Caco-2 (cell line): ENCODE measurements at regions of chr7 and their contacts with region 1.

Region 1: DNA sequence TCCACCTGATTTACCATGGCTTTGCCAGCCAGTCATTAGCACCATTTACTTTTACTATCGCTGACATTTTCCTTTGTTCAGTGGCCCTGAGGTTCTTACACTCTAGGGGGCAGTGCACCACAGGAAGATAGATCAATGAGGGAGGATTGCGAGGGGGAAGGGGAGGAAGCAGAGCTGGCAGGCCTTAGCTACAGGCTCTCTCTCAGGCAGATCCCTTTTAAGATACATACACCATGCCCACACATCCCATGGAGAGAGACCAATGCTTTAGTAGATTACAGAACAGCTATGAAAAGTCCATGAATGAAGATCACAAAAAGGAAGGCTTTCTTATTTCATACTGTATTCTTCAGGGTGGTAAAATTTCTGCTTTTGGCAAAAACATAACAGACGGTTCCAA is 47.4 kb downstream of the DENND11 start:
- DNase-seq: peak; percentile 76 to 77
- H3K4me3 ChIP-seq: no peak overlapping the region
- H3K4me3 Mint-ChIP-seq: no peak overlapping the region
- H3K27ac Mint-ChIP-seq: no peak overlapping the region
- H3K4me1 ChIP-seq: peaks cover 5% of the 10 kb centered on the region; the same call in 1 of the 2 replicates
- H3K4me1 Mint-ChIP-seq: peaks cover 6% of the 10 kb centered on the region
- H3K27me3 ChIP-seq: no peaks in the 10 kb centered on the region
- H3K27me3 Mint-ChIP-seq: no peaks in the 10 kb centered on the region
- CTCF ChIP-seq: peak; percentile 64 to 89

Region 2: DNA sequence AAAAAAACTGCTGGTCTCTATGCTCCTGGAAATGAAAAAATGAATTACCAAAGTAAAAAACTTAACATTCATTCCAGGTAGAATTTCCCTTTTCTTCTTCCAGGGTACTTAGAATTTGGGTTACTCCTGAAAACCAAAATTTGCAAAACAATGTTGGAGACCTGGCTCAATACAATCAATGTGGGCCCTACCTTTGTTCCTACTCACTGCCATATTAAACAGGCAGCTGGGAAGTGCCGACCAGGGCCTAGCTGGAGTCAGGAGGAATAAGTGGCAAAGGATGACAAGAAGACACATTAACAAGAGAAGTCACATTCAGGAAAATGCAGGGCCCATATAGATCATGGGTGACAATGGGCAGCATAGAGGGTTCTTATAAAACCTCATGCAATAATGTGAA is 109.7 kb before region 1 on chr7:
- CTCF ChIA-PET with region 1: no interaction called
- POLR2A ChIA-PET with region 1: no interaction called
- intact Hi-C with region 1: loop called (anchors 5 kb)
- DNase-seq: no peak
- H3K4me3 ChIP-seq: no peak overlapping the region
- H3K4me3 Mint-ChIP-seq: no peak overlapping the region
- H3K27ac Mint-ChIP-seq: no peak overlapping the region
- H3K4me1 ChIP-seq: no peaks in the 10 kb centered on the region
- H3K4me1 Mint-ChIP-seq: no peaks in the 10 kb centered on the region
- H3K27me3 ChIP-seq: no peaks in the 10 kb centered on the region
- H3K27me3 Mint-ChIP-seq: peaks cover 15% of the 10 kb centered on the region
- CTCF ChIP-seq: no peak

Region 3: GRCh38 chr7:141701489-141702046 is 47.0 kb after region 1 on chr7:
- CTCF ChIA-PET with region 1: interaction called, 7 read pairs
- POLR2A ChIA-PET with region 1: no interaction called
- intact Hi-C with region 1: loop called (anchors 10 kb)
- DNase-seq: peak; percentile 59 to 60
- H3K4me3 ChIP-seq: peak overlapping the region; percentile 84
- H3K4me3 Mint-ChIP-seq: peak overlapping the region; percentile 60
- H3K27ac Mint-ChIP-seq: no peak overlapping the region
- H3K4me1 ChIP-seq: peaks cover 46% of the 10 kb centered on the region
- H3K4me1 Mint-ChIP-seq: peaks cover 28% of the 10 kb centered on the region
- H3K27me3 ChIP-seq: no peaks in the 10 kb centered on the region
- H3K27me3 Mint-ChIP-seq: no peaks in the 10 kb centered on the region
- CTCF ChIP-seq: no peak

Region 4: DNA sequence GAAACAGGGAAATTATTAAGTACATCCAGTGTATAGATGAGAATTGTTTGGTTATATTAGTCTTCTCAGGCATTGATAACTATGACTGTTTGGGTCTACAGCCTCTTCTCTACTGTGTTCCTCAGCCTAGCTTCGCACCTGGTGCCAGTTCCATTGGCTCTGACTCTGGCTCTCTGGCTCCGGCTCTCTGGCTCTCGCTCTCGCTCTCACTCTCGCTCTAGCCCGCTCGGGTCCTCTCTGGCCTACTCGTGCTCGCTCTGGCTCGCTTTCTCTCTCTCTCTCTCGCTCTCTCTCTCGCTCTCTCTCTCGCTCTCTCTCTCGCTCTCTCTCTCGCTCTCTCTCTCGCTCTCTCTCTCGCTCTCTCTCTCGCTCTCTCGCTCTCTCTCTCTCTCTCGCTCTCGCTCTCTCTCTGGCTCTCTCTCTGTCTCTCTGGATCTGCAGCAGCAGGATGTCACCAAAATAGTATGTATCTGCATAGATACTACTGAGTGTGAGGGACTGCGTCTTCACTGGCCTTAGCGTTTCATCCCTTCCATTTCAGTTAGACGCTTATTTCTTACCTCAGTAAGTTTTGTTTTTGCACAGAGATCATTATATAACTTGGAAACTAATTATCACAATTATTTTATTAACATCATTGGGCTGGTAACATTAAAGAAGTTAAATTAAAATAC is 77.1 kb after region 1 on chr7:
- CTCF ChIA-PET with region 1: interaction called, 65 read pairs
- POLR2A ChIA-PET with region 1: no interaction called
- intact Hi-C with region 1: no loop called
- DNase-seq: no peak
- H3K4me3 ChIP-seq: no peak overlapping the region
- H3K4me3 Mint-ChIP-seq: no peak overlapping the region
- H3K27ac Mint-ChIP-seq: no peak overlapping the region
- H3K4me1 ChIP-seq: no peaks in the 10 kb centered on the region
- H3K4me1 Mint-ChIP-seq: no peaks in the 10 kb centered on the region
- H3K27me3 ChIP-seq: no peaks in the 10 kb centered on the region
- H3K27me3 Mint-ChIP-seq: no peaks in the 10 kb centered on the region
- CTCF ChIP-seq: no peak

Region 5: DNA sequence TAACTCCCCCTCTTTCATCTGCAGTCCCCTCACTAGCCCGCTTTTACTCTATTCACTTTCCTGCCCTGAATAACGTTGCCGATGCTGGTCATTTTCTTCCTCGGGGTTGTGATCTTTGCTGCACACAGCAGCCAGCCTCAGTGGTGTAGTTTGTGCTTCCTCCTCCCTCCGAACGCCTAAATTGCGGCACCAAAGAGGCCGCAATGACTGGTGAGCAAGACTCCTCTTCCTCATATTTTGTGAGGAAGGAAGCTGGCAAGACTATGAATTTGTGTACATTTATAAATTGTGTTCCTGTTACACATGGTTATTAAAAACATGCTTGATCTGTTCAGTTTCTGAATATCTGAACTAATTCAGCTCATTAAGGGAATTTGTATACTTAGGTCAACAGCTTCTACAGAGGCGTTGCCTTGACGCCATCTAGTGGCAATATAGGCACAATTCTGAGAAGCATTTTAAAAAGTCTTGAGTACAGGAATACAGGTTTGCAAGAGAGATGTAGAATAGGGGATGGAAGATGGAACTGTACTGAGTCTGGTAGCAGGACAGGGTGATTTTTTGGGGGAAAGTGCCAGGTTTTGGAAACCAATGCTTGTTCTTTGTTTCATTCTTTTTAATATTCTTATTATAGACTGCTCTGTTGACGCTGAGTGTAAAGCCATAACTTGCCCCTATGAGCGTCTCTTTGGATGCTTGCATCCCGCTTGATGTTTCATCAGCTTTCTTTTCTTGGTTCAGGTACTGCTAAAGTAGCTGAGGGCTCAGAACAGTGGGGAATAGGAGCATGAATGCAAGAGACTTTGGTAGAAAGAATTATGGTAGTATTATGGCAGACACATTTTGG is 131.4 kb after region 1 on chr7:
- CTCF ChIA-PET with region 1: interaction called, 24 read pairs
- POLR2A ChIA-PET with region 1: no interaction called
- intact Hi-C with region 1: loop called (anchors 1 kb)
- DNase-seq: peak; percentile 37 to 41
- H3K4me3 ChIP-seq: no peak overlapping the region
- H3K4me3 Mint-ChIP-seq: no peak overlapping the region
- H3K27ac Mint-ChIP-seq: no peak overlapping the region
- H3K4me1 ChIP-seq: no peaks in the 10 kb centered on the region
- H3K4me1 Mint-ChIP-seq: no peaks in the 10 kb centered on the region
- H3K27me3 ChIP-seq: no peaks in the 10 kb centered on the region
- H3K27me3 Mint-ChIP-seq: no peaks in the 10 kb centered on the region
- CTCF ChIP-seq: peak; percentile 74 to 86